Gastrocnemius medialis (tissue), 4 donors: ENCODE measurements at regions of chrX and their contacts with region 1.

Region 1: GRCh38 chrX:102599084-102599950 is at the start of gene ARMCX5:
- DNase-seq: peak; percentile 38 to 64
- ATAC-seq: peak; percentile 97
- H3K4me3 ChIP-seq: peak within 1 kb of the TSS; percentile 61 to 71 (median 65)
- H3K27ac ChIP-seq: peak within 1 kb of the TSS; percentile 59 to 83 (median 80)
- H3K4me1 ChIP-seq: no peaks in the 10 kb centered on the region
- H3K27me3 ChIP-seq: no peaks in the 10 kb centered on the region
- CTCF ChIP-seq: peak; percentile 12 to 26 (median 22)
- POLR2A ChIP-seq: peak; percentile 32 to 47
- total RNA-seq, gene ARMCX5: 2.4 to 7.9 (median 4.9) TPM

Region 2: GRCh38 chrX:102652031-102652688 is 52.8 kb after region 1 on chrX:
- in situ Hi-C with region 1: no loop called
- intact Hi-C with region 1: loop called (anchors 2 kb)
- DNase-seq: peak in 1 of 2 donors; percentile 29
- ATAC-seq: peak; percentile 56 to 70
- H3K4me3 ChIP-seq: peak overlapping the region; percentile 61 to 76 (median 70)
- H3K27ac ChIP-seq: peak overlapping the region; percentile 55 to 60 (median 60)
- H3K4me1 ChIP-seq: no peaks in the 10 kb centered on the region
- H3K27me3 ChIP-seq: no peaks in the 10 kb centered on the region
- CTCF ChIP-seq: peak in 4 of 5 experiments; percentile 19 to 44 (median 34)
- POLR2A ChIP-seq: no peak